ENCODE measurements at regions of chr5 and their contacts with region 1.

Region 1: DNA sequence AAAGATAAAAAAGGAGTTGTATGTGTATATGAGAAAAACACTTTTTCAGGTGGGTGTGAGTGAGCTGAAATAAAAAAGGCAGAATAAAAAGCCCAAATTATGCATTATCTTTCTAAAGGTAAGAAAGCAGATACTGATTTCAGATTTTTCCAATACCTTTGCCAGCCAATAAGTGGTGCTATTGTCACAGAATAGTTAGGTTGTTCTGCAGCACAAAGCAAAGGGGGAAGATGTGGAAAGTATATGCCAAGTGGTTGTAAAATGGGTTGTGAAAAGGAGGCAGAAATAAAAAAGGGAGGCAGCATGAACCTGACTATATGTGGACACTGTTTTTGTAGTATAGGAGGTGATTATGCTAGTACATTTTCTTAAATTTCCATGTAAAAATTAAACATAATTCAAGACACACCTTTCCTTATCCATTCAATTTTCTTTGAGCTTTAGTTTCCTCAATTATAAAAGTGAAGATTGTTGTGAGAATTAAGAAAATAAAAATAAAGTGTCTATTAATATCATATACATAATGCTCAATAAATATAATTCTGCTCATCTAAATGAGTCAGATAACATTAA is 106.7 kb downstream of the SMIM15 start:
- DNase-seq: peak; percentile 70

Region 2: DNA sequence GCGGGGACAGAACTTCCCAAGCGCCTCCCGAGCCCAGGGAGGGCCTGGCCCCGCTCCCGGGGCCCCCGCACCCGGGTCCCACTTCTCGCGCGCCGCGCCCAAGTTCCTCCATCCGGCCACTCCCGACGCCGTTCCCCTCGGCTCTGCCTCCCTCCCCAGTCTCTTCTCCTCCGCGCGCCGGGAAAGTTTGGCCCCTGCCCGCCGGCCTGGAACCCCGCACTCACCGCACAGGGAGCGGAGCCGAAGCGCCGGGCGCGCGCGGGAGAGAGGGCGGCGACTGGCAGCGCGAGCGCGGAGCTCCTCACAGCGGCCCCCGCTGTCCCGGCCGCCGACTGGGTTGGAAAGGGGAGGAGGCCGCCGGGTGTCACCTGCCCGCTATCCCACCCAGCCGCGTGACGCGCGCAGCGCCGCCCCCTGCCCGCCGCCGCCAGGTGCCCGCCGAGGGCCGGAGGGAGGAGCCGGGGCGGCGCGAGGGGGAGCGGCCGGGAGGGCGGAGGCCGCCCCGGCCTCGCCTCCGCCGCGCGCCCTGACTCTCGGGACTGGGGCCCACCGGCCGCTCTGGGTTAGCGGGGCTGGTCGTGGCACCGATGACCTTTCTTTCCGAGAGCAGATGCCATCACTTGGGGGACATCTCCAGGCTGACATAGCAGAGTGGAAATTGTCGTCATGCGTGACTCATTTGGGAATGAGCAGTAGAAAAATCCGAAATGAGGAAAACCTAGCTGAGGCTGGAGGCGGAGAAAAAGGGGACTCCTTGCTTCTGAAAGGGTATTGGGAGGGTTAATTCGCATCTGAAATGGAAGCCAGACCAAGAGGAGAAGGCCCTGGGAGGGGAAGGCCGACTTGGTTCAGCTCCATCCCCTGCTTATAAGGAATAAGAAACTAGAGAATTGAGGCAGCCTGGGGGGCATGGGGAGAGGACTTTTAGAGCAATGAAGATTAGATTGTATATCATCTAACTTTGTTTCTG is 211.3 kb before region 1 on chr5 and contains the start of gene ELOVL7:
- in situ Hi-C with region 1: no loop called
- DNase-seq: peak; percentile 86

Region 3: GRCh38 chr5:61534481-61535267 is 479.2 kb after region 1 on chr5:
- in situ Hi-C with region 1: no loop called
- DNase-seq: peak; percentile 53

Region 4: DNA sequence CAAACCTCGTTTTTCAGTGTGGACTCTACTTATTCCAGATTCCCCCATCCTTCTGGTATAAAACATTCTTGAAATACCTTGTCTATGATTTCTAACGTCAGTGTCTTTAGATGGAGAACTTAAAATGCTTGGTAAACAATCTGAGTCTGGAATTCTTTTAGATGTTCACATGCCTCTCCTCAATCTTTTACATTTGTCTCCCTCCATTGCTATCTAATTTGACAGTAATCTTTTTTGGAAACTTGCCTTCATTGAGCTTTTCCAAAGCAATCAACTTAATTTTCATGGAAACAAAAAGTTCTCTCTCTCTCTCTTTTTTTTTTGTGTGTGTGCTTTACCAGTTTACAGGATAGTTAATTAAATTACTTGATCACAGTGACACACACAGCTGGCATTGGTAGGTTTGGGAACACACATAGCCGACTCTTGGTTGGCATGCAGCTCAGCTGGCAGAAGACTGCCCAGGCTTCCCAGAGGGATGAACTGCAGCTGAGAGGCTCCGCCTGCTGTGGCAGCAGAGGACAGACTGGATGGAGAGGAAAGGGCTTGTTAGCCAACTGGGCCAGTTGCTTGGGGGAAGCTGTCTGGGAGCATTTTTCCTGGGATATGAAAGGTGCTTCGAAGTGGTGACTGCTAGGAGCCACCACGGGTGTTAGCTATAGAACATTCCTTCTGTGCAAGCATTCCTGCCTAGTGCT is 547.8 kb after region 1 on chr5:
- in situ Hi-C with region 1: no loop called
- DNase-seq: no peak

Region 5: GRCh38 chr5:61658592-61659008 is 603.1 kb after region 1 on chr5:
- in situ Hi-C with region 1: loop called (anchors 25 kb)
- DNase-seq: peak; percentile 83